GM23248 (cell line): ENCODE measurements at regions of chr14 and their contacts with region 1.

Region 1: GRCh38 chr14:81453166-81453766 is 53.1 kb upstream of the STON2 start:
- DNase-seq: peak; percentile 71
- H3K4me3 ChIP-seq: peak overlapping the region; percentile 34
- H3K27ac ChIP-seq: no peak overlapping the region
- H3K4me1 ChIP-seq: no peaks in the 10 kb centered on the region; the same call in 1 of the 2 replicates
- H3K27me3 ChIP-seq: peaks cover 25% of the 10 kb centered on the region

Region 2: DNA sequence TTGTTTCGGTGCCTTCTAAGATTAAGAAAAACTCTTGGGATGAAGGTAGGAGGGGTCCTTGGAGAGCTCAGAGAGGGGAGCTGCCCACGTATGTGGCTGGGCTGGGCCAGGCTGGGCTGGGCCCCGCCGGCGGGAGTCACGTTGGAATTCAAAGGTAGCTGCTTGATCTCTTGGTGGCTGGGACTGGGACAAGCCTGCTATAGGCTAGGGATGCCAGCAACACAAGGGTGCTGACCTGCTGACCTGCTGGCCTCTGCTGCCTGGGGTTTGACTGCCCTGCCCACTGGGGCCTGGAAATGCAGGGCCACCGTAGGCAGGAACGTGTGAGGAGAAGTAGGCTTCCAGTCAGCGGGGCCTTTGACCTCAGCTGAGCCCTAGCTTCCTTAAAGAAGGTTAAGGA is 179.7 kb before region 1 on chr14:
- in situ Hi-C with region 1: loop called (anchors 5 kb)
- DNase-seq: no peak
- H3K4me3 ChIP-seq: no peak overlapping the region
- H3K27ac ChIP-seq: no peak overlapping the region
- H3K4me1 ChIP-seq: no peaks in the 10 kb centered on the region
- H3K27me3 ChIP-seq: peaks cover 23% of the 10 kb centered on the region